Activated CD8-positive, alpha-beta T cell treated with anti-CD3 and anti-CD28 coated beads for 36 hours (primary cell): ENCODE measurements at regions of chr11 and their contacts with region 1.

Region 1: GRCh38 chr11:82718307-82718706 is 15.4 kb downstream of the FAM181B start:
- DNase-seq: peak; percentile 34
- ATAC-seq: peak; percentile 45
- H3K4me3 Mint-ChIP-seq: no peak overlapping the region
- H3K27ac Mint-ChIP-seq: no peak overlapping the region
- H3K4me1 Mint-ChIP-seq: no peaks in the 10 kb centered on the region
- H3K27me3 Mint-ChIP-seq: peaks cover 1% of the 10 kb centered on the region
- CTCF ChIP-seq: peak; percentile 78

Region 2: GRCh38 chr11:82701847-82702520 is 16.3 kb before region 1 on chr11:
- CTCF ChIA-PET with region 1: interaction called, 13 read pairs
- POLR2A ChIA-PET with region 1: no interaction called
- intact Hi-C with region 1: no loop called
- DNase-seq: peak; percentile 42
- ATAC-seq: peak; percentile 55
- H3K4me3 Mint-ChIP-seq: no peak overlapping the region
- H3K27ac Mint-ChIP-seq: no peak overlapping the region
- H3K4me1 Mint-ChIP-seq: no peaks in the 10 kb centered on the region
- H3K27me3 Mint-ChIP-seq: peaks cover 8% of the 10 kb centered on the region
- CTCF ChIP-seq: peak; percentile 71

Region 3: DNA sequence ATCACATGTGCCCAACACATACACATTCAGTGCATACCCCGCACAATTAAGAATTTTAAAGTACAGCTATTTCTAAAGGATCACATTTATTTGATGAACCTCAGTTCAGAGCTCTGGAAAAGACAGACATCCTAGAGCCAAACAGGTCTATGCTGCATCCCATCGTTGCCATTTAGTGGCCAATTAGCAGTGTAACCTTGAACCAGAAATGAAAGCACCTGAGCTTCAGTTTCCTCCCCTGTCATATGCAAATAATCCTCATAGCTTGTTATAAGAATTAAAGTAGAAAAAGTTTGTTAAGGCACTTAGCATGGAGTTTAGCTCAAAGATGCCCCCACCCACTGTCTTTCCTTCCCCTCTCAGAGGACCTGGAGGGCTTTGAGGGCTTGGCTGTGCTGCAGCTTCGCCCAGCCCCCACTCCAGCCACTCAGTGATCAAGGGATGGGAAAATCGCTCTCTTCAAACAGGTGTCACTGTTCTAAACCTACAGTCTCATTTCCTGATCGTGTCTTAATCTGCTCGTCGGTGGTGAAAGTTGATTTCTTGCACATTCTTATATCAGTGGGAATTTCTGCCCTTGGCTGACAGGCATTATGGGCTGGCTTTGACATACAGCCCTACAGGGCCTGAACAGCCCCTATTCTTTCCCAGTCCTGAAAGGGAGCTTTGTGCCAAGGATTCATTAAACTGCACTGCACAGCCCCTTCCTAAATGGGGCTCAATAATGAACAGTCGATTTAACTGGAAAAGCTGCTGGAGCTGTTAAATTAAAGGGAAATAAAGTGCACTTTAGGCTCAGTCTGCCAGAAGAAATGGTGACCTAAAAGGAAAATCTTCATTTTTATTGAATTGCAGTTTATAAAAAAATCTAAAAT is 38.7 kb after region 1 on chr11:
- CTCF ChIA-PET with region 1: interaction called, 10 read pairs
- POLR2A ChIA-PET with region 1: interaction called, 3 read pairs
- intact Hi-C with region 1: no loop called
- DNase-seq: no peak
- ATAC-seq: no peak
- H3K4me3 Mint-ChIP-seq: no peak overlapping the region
- H3K27ac Mint-ChIP-seq: no peak overlapping the region
- H3K4me1 Mint-ChIP-seq: peaks cover 18% of the 10 kb centered on the region
- H3K27me3 Mint-ChIP-seq: no peaks in the 10 kb centered on the region
- CTCF ChIP-seq: no peak

Region 4: GRCh38 chr11:82767123-82767522 is 48.8 kb after region 1 on chr11:
- CTCF ChIA-PET with region 1: no interaction called
- POLR2A ChIA-PET with region 1: no interaction called
- intact Hi-C with region 1: no loop called
- DNase-seq: no peak
- ATAC-seq: no peak
- H3K4me3 Mint-ChIP-seq: no peak overlapping the region
- H3K27ac Mint-ChIP-seq: no peak overlapping the region
- H3K4me1 Mint-ChIP-seq: no peaks in the 10 kb centered on the region
- H3K27me3 Mint-ChIP-seq: peaks cover 1% of the 10 kb centered on the region
- CTCF ChIP-seq: no peak

Region 5: GRCh38 chr11:82845356-82846353 is 127.3 kb after region 1 on chr11:
- CTCF ChIA-PET with region 1: interaction called, 15 read pairs
- POLR2A ChIA-PET with region 1: no interaction called
- intact Hi-C with region 1: no loop called
- DNase-seq: no peak
- ATAC-seq: no peak
- H3K4me3 Mint-ChIP-seq: no peak overlapping the region
- H3K27ac Mint-ChIP-seq: no peak overlapping the region
- H3K4me1 Mint-ChIP-seq: peaks cover 2% of the 10 kb centered on the region
- H3K27me3 Mint-ChIP-seq: no peaks in the 10 kb centered on the region
- CTCF ChIP-seq: no peak

Region 6: GRCh38 chr11:83249972-83250593 is 531.8 kb after region 1 on chr11:
- CTCF ChIA-PET with region 1: interaction called, 5 read pairs
- POLR2A ChIA-PET with region 1: no interaction called
- intact Hi-C with region 1: loop called (anchors 10 kb)
- DNase-seq: peak; percentile 12
- ATAC-seq: peak; percentile 88
- H3K4me3 Mint-ChIP-seq: no peak overlapping the region
- H3K27ac Mint-ChIP-seq: no peak overlapping the region
- H3K4me1 Mint-ChIP-seq: no peaks in the 10 kb centered on the region
- H3K27me3 Mint-ChIP-seq: no peaks in the 10 kb centered on the region
- CTCF ChIP-seq: peak; percentile 83